Vagina (tissue), 2 donors: ENCODE measurements at regions of chr17 and their contacts with region 1.

Region 1: GRCh38 chr17:45098869-45099616 is 33.3 kb downstream of the PLCD3 start:
- DNase-seq: no peak
- H3K4me3 ChIP-seq: no peak overlapping the region
- H3K27ac ChIP-seq: peak overlapping the region; percentile 53
- H3K4me1 ChIP-seq: peaks cover 27% of the 10 kb centered on the region
- H3K27me3 ChIP-seq: no peaks in the 10 kb centered on the region
- CTCF ChIP-seq: peak; percentile 85 to 95 (median 90)
- POLR2A ChIP-seq: no peak

Region 2: DNA sequence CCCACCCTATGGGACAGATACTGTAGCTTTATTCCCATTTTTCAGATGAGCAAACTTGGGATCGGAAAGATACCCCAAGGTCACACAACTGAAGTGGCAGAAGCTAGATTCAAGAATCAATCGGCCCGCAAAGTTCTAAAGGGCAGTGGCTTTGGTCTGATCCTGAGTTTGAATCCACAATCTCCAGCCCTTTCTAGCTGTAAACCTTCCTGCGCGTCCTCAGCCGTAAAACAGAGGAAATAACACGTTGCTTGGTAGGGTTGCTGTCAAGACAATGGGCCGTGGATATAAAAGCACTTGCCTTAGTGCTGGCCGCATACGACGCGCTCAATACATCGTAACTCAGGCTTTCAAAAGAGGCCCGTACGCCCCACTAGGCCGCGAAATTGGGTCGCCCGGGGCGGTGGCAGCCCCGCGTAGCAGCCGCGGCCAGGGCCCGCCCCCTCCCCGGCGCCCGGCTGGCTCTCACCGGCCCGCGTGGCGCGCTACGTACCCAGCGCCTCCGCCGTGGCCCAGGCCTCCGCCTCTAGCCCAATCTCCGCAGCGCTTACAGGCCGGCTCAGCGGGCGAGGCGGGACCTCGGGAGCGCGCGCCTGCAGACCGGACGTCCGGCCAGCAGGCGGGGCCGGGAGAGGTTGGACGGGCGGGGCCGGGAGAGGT is 47.9 kb before region 1 on chr17 and contains the start of gene DCAKD:
- intact Hi-C with region 1: loop called (anchors 5 kb)
- DNase-seq: no peak
- H3K4me3 ChIP-seq: peak within 1 kb of the TSS; percentile 69 to 73
- H3K27ac ChIP-seq: peak within 1 kb of the TSS; percentile 95
- H3K4me1 ChIP-seq: peaks cover 39% of the 10 kb centered on the region
- H3K27me3 ChIP-seq: no peaks in the 10 kb centered on the region
- CTCF ChIP-seq: no peak
- POLR2A ChIP-seq: peak in 1 of 2 donors; percentile 74
- total RNA-seq, gene DCAKD: 54.5 TPM

Region 3: GRCh38 chr17:45190503-45191255 is 91.6 kb after region 1 on chr17:
- intact Hi-C with region 1: no loop called
- DNase-seq: no peak
- H3K4me3 ChIP-seq: no peak overlapping the region
- H3K27ac ChIP-seq: no peak overlapping the region
- H3K4me1 ChIP-seq: no peaks in the 10 kb centered on the region
- H3K27me3 ChIP-seq: no peaks in the 10 kb centered on the region
- CTCF ChIP-seq: no peak
- POLR2A ChIP-seq: no peak